ENCODE measurements at regions of chr20 and their contacts with region 1.

Region 1: DNA sequence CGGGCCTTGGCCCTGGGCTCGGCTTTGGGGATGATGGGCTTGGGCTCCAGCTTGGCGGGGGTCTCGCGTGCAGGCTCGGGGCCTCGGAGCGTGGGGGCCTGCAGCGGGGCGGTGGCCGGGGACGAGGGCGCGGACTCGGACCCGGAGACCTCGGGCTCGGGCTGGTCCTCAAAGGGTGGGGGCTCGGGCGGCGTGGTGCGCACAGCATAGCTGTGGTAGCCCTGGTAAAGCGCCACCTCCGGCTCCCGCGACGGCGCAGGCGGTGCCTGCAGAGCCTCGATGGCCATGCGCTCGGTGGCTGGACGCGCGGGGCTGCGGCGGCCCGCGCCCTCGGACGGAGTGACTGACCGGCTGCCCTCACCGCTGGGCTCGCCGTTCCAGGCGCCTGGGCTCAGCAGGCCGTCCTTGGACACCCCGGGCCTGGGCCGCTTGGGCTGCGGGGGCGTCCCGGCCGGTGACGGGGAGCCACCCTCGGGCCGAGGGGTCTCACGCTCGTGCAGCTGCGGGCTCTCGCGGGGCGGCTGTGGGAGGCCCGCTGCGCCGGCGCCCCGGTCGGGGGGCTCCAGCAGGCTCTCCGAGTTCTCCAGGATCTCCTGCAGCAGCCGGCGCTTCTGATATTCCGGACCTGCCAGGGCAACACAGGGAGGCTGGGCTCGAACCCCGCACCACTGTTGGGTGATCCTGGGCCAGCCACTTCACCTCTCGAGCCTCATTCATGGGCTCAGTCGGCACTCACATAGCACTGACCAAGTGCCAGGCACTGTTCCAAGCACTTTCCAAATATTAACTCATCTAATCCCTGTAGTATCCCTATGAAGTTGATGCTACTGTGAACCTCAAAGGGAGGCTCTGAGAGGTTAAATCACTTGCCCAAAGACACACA is 71.0 kb downstream of the JPH2 start:
- DNase-seq: no peak
- H3K4me3 ChIP-seq: no peak overlapping the region
- H3K27ac ChIP-seq: no peak overlapping the region
- H3K4me1 ChIP-seq: no peaks in the 10 kb centered on the region
- H3K27me3 ChIP-seq: peaks cover 12% of the 10 kb centered on the region
- CTCF ChIP-seq: no peak

Region 2: GRCh38 chr20:43925801-43926200 is 190.2 kb before region 1 on chr20:
- intact Hi-C with region 1: no loop called
- DNase-seq: peak; percentile 63
- H3K4me3 ChIP-seq: no peak overlapping the region
- H3K27ac ChIP-seq: no peak overlapping the region
- H3K4me1 ChIP-seq: no peaks in the 10 kb centered on the region
- H3K27me3 ChIP-seq: no peaks in the 10 kb centered on the region
- CTCF ChIP-seq: no peak

Region 3: GRCh38 chr20:44187051-44187762 is 71.2 kb after region 1 on chr20 and contains the start of gene JPH2:
- intact Hi-C with region 1: loop called (anchors 2 kb)
- DNase-seq: peak; percentile 64
- H3K4me3 ChIP-seq: peak within 1 kb of the TSS; percentile 35
- H3K27ac ChIP-seq: peak within 1 kb of the TSS; percentile 47
- H3K4me1 ChIP-seq: no peaks in the 10 kb centered on the region
- H3K27me3 ChIP-seq: no peaks in the 10 kb centered on the region
- CTCF ChIP-seq: no peak
- total RNA-seq, gene JPH2: 1.3 to 13.8 TPM

Measured in colonic mucosa (tissue), 4 donors.